MCF 10A (cell line): ENCODE measurements at regions of chr3 and their contacts with region 1.

Region 1: DNA sequence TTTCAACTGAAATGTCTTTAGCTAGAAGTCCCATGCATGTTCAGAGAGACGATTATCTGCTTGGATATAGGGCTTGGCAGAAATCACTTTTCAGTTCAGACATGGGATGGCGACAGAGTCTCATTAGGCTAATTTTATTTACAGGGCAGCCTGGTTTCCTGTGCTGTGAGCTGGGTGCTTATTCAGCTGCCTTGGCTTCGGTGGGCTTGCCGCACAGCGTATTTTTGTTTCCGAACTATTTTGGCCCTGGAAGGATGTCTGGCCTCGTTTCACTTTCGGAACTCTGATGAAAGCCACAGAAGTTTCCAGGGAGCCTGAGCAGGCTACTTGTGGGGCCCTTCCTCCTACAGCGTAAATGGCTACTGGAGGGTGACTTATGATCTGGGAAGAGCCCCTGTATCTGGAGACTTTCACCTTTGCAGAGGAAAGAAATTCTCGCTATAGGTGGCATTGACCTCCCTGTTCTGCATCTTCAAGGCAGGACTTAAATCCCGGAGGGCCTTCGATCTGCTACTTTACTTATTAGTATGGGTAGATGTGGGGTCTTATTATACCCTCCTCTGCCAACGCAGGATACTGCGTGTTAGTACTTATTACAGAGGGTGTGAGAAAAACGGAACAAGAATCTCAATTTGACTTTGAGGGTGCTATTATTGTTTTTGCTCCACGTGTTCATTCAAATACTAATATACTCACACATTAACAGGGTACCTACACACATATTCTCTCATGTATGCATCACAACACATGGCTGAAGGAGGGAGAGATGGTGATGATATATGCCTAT is 364.0 kb upstream of the RBMS3 start:
- DNase-seq: peak; percentile 57
- H3K4me3 Mint-ChIP-seq: no peak overlapping the region
- H3K27ac Mint-ChIP-seq: no peak overlapping the region
- H3K4me1 Mint-ChIP-seq: peaks cover 13% of the 10 kb centered on the region
- H3K27me3 Mint-ChIP-seq: no peaks in the 10 kb centered on the region
- CTCF ChIP-seq: peak; percentile 61

Region 2: DNA sequence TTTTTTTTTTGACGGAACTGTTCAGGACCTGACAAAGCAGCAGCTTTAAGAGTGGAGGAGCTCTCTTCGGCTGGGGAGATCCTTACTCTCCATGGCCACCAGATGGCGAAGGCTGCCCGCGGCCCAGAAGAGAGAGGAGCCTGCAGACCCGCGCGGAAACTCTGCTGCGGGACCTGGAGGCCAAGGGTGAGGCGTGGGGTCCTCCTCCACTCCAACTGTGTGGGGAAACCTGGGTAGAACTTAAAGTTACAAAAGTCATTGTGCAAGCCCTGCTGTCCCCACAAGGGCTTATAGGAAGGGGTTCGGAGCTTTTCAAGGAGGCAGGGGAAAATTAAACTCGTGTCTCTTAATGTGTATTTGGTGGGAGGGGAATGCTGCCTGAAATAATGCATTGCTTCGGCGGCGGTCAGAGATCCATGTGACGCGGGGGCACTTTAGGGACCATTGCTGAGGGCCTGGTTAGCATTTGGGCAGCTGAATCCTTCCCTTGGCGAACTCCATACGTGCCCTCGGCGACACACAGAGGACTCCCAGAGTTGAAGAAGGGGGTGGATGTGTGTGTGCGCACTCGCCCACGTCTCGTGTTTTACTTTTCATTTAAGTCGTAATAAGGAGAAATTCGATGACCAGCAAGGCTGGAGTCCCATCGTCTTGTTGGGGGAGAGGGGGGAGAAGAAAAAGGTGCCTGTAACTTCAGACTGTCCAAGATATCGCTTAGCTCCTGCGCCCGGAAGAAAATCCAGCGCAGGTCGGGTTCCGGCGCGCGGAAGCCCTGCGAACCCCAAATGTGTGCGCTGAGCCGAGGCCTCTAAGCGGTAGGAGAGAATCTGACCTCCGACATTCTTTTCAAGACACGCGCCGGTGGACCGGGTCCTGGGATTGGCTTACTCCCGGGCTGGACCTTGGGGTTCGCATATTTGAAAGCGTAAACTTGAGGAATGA is 1204.5 kb before region 1 on chr3:
- CTCF ChIA-PET with region 1: no interaction called
- POLR2A ChIA-PET with region 1: no interaction called
- intact Hi-C with region 1: no loop called
- DNase-seq: peak; percentile 83
- H3K4me3 Mint-ChIP-seq: peak overlapping the region; percentile 74
- H3K27ac Mint-ChIP-seq: peak overlapping the region; percentile 17
- H3K4me1 Mint-ChIP-seq: peaks cover 17% of the 10 kb centered on the region
- H3K27me3 Mint-ChIP-seq: no peaks in the 10 kb centered on the region
- CTCF ChIP-seq: peak; percentile 72

Region 3: DNA sequence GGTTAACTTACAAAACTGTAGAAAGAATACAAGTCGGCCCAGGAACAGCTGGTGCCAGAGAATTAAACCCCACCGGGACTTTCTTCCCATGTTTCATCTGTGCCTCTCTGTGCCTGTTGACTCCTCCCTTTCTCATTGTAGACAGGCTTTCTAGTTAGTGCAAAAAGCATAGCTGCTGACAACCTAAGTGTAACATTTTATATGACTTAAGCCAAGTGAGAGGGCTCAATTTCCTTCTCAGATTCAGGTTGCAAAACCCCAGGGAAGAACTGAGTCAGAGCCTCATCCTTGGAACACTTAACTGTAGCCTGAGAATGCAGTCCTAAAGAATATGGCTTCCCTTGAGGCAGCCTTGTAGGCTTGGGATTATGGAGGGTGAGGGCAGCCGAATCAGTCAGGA is 265.7 kb before region 1 on chr3:
- CTCF ChIA-PET with region 1: no interaction called
- POLR2A ChIA-PET with region 1: no interaction called
- intact Hi-C with region 1: no loop called
- DNase-seq: peak; percentile 8
- H3K4me3 Mint-ChIP-seq: no peak overlapping the region
- H3K27ac Mint-ChIP-seq: no peak overlapping the region
- H3K4me1 Mint-ChIP-seq: no peaks in the 10 kb centered on the region
- H3K27me3 Mint-ChIP-seq: no peaks in the 10 kb centered on the region
- CTCF ChIP-seq: no peak

Region 4: DNA sequence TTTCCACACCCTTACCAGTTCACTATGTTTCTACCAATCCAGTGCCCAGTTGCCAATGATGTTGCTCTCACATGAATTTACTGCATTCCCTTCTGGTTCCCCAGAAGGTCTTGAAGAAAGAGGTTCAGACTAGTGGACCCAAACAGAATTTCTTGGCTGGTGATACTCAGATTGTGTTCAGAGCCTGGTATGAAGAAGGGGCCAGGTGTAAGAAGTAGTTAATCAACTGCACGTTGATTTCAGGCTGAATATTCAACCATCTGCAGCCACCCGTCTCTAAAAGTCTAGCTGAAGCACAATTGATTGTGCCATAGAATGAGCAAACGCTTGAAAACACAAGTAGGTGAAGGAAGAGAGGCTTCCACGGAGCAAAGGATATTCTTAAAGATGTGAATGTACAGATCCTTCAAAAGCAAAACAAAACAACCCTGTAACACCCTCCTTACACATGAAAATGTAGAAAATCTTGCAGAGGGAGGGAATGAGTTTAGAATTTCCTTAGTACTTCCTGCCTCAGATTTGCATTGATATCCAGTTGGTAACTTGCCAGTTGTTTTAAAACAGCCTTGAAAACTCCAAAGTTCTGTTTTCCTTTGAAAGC is 368.7 kb after region 1 on chr3:
- CTCF ChIA-PET with region 1: interaction called, 17 read pairs
- POLR2A ChIA-PET with region 1: interaction called, 27 read pairs
- intact Hi-C with region 1: loop called (anchors 1 kb)
- DNase-seq: peak; percentile 74
- H3K4me3 Mint-ChIP-seq: peak overlapping the region; percentile 79
- H3K27ac Mint-ChIP-seq: peak overlapping the region; percentile 85
- H3K4me1 Mint-ChIP-seq: peaks cover 16% of the 10 kb centered on the region
- H3K27me3 Mint-ChIP-seq: no peaks in the 10 kb centered on the region
- CTCF ChIP-seq: no peak

Region 5: GRCh38 chr3:29409409-29409808 is 492.5 kb after region 1 on chr3:
- CTCF ChIA-PET with region 1: no interaction called
- POLR2A ChIA-PET with region 1: no interaction called
- intact Hi-C with region 1: loop called (anchors 5 kb)
- DNase-seq: no peak
- H3K4me3 Mint-ChIP-seq: no peak overlapping the region
- H3K27ac Mint-ChIP-seq: no peak overlapping the region
- H3K4me1 Mint-ChIP-seq: peaks cover 11% of the 10 kb centered on the region
- H3K27me3 Mint-ChIP-seq: no peaks in the 10 kb centered on the region
- CTCF ChIP-seq: no peak

Region 6: GRCh38 chr3:29764603-29765254 is 847.8 kb after region 1 on chr3:
- CTCF ChIA-PET with region 1: interaction called, 9 read pairs
- POLR2A ChIA-PET with region 1: interaction called, 5 read pairs
- intact Hi-C with region 1: loop called (anchors 1 kb)
- DNase-seq: peak; percentile 94
- H3K4me3 Mint-ChIP-seq: no peak overlapping the region
- H3K27ac Mint-ChIP-seq: peak overlapping the region; percentile 35
- H3K4me1 Mint-ChIP-seq: peaks cover 17% of the 10 kb centered on the region
- H3K27me3 Mint-ChIP-seq: no peaks in the 10 kb centered on the region
- CTCF ChIP-seq: peak; percentile 79

Region 7: GRCh38 chr3:30012941-30013543 is 1096.1 kb after region 1 on chr3:
- CTCF ChIA-PET with region 1: no interaction called
- POLR2A ChIA-PET with region 1: no interaction called
- intact Hi-C with region 1: loop called (anchors 5 kb)
- DNase-seq: peak; percentile 82
- H3K4me3 Mint-ChIP-seq: no peak overlapping the region
- H3K27ac Mint-ChIP-seq: no peak overlapping the region
- H3K4me1 Mint-ChIP-seq: no peaks in the 10 kb centered on the region
- H3K27me3 Mint-ChIP-seq: no peaks in the 10 kb centered on the region
- CTCF ChIP-seq: peak; percentile 53